OCI-LY7 (cell line): ENCODE measurements at regions of chrX and their contacts with region 1.

Region 1: GRCh38 chrX:48957827-48958634 is 624 bp upstream of the OTUD5 start:
- DNase-seq: peak; percentile 96
- H3K4me3 ChIP-seq: peak overlapping the region; percentile 91
- H3K27ac ChIP-seq: peak overlapping the region; percentile 93
- H3K4me1 ChIP-seq: peaks cover 56% of the 10 kb centered on the region
- CTCF ChIP-seq: no peak

Region 2: DNA sequence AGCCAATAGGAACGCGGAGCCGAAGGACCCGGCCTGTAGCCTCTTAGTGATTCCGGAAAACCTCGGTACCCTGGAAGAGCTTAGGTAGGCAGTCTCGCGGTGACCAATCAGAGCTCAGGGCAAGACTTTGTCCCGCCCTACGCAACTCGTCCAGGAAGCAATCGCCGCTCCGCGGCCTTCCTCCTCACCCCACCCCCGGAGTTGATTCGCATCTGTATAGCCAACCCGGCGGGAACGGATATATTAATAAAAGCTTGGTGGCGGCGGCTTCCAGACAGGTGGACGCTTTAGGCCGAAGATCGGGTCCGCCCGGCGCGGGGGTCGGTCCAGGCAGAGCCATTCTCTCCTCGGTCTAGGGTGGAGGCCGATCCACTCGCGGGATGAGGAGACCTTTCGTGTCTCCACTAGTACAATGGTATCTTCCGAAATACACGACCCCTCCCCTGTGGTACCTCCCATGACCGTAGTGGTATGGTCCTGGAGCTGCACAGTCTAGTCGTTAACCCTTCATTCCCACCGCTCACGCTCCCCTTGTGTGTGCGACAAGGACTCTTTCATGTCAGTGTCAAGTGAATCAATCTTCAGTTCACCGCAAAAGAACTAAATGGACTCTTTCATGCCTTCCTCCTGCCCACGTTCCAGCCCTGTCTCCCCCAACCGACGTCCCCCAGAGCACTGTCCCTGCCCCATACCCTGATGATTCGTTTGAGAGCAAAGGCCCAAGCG is 220.7 kb before region 1 on chrX:
- CTCF ChIA-PET with region 1: interaction called, 3 read pairs
- POLR2A ChIA-PET with region 1: no interaction called
- intact Hi-C with region 1: loop called (anchors 5 kb)
- DNase-seq: peak; percentile 98
- H3K4me3 ChIP-seq: peak overlapping the region; percentile 73
- H3K27ac ChIP-seq: peak overlapping the region; percentile 92
- H3K4me1 ChIP-seq: peaks cover 10% of the 10 kb centered on the region
- CTCF ChIP-seq: no peak

Region 3: GRCh38 chrX:48917139-48918001 is 40.7 kb before region 1 on chrX:
- CTCF ChIA-PET with region 1: no interaction called
- POLR2A ChIA-PET with region 1: no interaction called
- intact Hi-C with region 1: loop called (anchors 5 kb)
- DNase-seq: peak; percentile 92
- H3K4me3 ChIP-seq: peak overlapping the region; percentile 99
- H3K27ac ChIP-seq: peak overlapping the region; percentile 80
- H3K4me1 ChIP-seq: peaks cover 62% of the 10 kb centered on the region
- CTCF ChIP-seq: peak; percentile 87

Region 4: DNA sequence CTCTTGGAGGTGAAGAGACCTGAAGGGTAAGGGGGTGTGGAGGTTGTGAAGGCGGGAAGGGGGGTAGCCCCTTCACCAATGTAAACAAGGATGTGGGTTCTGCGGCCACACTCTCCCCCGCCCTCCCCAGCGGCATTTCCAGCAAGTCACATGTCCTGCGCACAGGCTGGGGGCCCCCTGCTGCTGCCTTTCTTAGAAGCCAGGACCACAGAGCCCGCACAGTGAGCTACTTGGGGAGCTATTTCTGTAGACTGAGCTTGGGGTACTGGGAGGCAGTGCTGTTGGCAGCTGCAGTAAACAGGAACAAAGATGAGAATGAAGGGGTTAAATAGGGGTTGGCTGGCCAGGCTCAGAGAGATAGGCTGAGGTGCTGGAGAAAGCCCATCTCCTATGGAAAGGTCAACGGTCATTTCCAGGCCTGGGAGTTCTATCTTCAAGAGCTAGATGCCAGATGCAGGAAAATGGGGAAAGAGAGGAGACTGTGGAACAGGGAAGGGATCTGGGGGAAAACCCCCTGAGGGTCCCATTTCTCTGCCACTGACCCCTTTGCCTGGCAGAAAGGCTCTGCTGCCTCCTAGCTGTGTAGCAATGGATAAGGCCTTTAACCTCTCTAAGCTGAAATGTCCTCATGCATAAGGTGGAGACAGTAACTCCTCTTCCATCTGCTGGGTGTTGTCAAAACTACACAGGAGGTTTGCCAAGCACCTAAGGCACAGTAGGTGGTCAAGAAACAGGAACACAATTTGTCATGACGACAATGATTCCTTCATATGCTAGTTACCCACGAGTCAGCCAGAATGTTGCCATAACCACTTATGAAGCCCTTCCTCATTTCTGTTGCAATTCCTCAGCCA is 20.8 kb before region 1 on chrX:
- CTCF ChIA-PET with region 1: no interaction called
- POLR2A ChIA-PET with region 1: interaction called, 5 read pairs
- intact Hi-C with region 1: loop called (anchors 2 kb)
- DNase-seq: peak; percentile 91
- H3K4me3 ChIP-seq: peak overlapping the region; percentile 60
- H3K27ac ChIP-seq: peak overlapping the region; percentile 100
- H3K4me1 ChIP-seq: peaks cover 89% of the 10 kb centered on the region
- CTCF ChIP-seq: peak; percentile 74

Region 5: GRCh38 chrX:49002091-49002935 is 44.3 kb after region 1 on chrX and contains the start of gene GRIPAP1:
- CTCF ChIA-PET with region 1: interaction called, 5 read pairs
- POLR2A ChIA-PET with region 1: interaction called, 7 read pairs
- intact Hi-C with region 1: loop called (anchors 5 kb)
- DNase-seq: peak; percentile 94
- H3K4me3 ChIP-seq: peak within 1 kb of the TSS; percentile 88
- H3K27ac ChIP-seq: peak within 1 kb of the TSS; percentile 75
- H3K4me1 ChIP-seq: peaks cover 20% of the 10 kb centered on the region
- CTCF ChIP-seq: no peak
- total RNA-seq, gene GRIPAP1: 27.5 and 42.7 TPM in 2 replicates

Region 6: GRCh38 chrX:49043220-49043986 is 85.4 kb after region 1 on chrX and contains the start of gene TFE3:
- CTCF ChIA-PET with region 1: no interaction called
- POLR2A ChIA-PET with region 1: interaction called, 12 read pairs
- intact Hi-C with region 1: loop called (anchors 2 kb)
- DNase-seq: peak; percentile 98
- H3K4me3 ChIP-seq: peak within 1 kb of the TSS; percentile 84
- H3K27ac ChIP-seq: peak within 1 kb of the TSS; percentile 55
- H3K4me1 ChIP-seq: peaks cover 45% of the 10 kb centered on the region
- CTCF ChIP-seq: peak; percentile 73
- total RNA-seq, gene TFE3: 7.6 and 10.2 TPM in 2 replicates

Region 7: GRCh38 chrX:49199906-49200771 is 242.1 kb after region 1 on chrX and contains the start of gene SYP:
- CTCF ChIA-PET with region 1: no interaction called
- POLR2A ChIA-PET with region 1: no interaction called
- intact Hi-C with region 1: no loop called
- DNase-seq: peak; percentile 87
- H3K4me3 ChIP-seq: peak within 1 kb of the TSS; percentile 74
- H3K27ac ChIP-seq: no peak within 1 kb of the TSS
- H3K4me1 ChIP-seq: peaks cover 10% of the 10 kb centered on the region
- CTCF ChIP-seq: no peak
- total RNA-seq, gene SYP: 0.79 and 2.3 TPM in 2 replicates